ENCODE measurements at regions of chr9 and their contacts with region 1.

Region 1: DNA sequence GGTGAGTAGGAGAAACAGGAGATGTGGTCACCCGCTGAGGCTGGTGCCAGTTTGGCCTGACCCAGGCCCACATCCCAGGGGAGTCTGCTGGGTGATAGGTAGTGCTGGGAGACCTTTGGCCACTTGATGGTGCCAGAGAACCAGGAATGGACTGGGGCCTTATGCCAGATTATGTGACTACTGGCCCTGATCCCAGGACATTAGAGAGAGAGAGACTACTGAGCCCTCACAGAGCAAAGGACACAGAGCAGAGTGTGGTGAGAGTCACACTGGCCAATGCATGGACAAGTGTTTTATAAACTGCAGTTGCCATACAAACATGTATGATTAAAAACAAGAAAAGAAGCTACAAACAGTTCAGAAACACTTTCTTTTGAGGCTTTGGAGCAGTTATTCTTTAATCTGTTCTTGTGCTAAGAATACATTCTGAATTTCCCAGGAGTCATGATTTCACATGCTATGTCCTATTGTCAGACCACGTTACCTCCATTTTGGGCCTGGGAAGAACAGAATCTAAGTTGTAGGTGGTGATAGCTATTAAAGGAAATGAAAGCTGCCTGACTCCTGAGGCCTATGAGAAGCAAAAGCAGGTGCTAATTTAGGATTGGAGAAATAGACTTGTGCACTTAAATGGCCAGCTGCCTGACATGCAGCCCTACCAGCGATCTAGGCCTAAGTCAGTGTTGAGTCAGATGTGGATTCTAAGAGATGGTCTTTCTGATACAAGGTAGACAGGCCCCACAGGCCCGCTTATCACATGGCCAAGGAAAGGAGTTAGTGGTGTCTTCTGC is 32.6 kb upstream of the TMOD1 start:
- DNase-seq: peak; percentile 67
- ATAC-seq: peak; percentile 100
- H3K4me3 ChIP-seq: no peak overlapping the region
- H3K27ac ChIP-seq: no peak overlapping the region
- H3K4me1 ChIP-seq: no peaks in the 10 kb centered on the region
- H3K27me3 ChIP-seq: no peaks in the 10 kb centered on the region
- CTCF ChIP-seq: peak; percentile 95
- EP300 ChIP-seq: no peak
- POLR2A ChIP-seq: no peak
- RAD21 ChIP-seq: peak; percentile 94

Region 2: DNA sequence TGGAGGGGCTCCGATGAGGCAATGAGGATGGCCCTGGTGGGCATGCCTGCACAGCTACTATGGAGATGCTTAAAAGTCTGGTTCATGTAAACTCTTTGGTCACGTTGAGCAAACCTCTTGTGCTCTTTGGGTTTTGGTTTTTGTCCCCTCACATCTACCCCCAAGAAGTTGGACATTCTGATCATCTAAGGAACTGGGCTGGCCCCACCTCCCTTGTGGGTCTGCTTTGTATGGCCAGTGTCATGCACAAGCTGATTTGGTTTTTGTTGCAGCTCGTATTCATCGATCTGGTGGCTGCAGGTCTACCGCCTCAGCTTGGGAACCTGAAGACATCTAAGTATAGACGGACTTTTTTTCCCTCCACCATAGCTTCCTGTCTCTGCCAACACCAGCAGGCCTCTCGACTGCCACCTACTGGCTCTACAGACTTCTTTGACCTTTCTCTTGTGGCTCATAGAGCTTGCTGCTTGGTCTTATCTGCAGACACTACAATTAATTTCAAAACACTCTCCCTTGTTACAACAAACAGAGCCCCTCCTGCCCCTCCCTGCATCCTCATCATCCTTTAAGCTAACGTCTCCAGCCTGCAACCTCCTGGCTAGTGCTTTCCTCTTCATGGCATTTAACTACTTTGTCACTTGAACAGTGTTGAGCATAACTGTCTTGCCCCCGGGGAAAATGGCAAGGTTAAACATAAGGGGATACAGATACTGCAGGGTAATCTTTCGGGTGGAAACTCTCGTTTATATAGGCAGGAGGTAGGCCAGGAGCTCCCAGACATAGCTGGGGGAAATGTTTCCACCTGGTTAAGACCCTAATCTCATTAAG is 129.8 kb after region 1 on chr9:
- CTCF ChIA-PET with region 1: interaction called, 23 read pairs
- POLR2A ChIA-PET with region 1: no interaction called
- in situ Hi-C with region 1: loop called (anchors 10 kb)
- intact Hi-C with region 1: loop called (anchors 1 kb)
- DNase-seq: peak; percentile 69
- ATAC-seq: peak; percentile 91
- H3K4me3 ChIP-seq: no peak overlapping the region
- H3K27ac ChIP-seq: no peak overlapping the region
- H3K4me1 ChIP-seq: peaks cover 6% of the 10 kb centered on the region
- H3K27me3 ChIP-seq: no peaks in the 10 kb centered on the region
- CTCF ChIP-seq: peak; percentile 86
- EP300 ChIP-seq: no peak
- POLR2A ChIP-seq: no peak
- RAD21 ChIP-seq: peak; percentile 53; the same call in 1 of the 2 replicates

Region 3: DNA sequence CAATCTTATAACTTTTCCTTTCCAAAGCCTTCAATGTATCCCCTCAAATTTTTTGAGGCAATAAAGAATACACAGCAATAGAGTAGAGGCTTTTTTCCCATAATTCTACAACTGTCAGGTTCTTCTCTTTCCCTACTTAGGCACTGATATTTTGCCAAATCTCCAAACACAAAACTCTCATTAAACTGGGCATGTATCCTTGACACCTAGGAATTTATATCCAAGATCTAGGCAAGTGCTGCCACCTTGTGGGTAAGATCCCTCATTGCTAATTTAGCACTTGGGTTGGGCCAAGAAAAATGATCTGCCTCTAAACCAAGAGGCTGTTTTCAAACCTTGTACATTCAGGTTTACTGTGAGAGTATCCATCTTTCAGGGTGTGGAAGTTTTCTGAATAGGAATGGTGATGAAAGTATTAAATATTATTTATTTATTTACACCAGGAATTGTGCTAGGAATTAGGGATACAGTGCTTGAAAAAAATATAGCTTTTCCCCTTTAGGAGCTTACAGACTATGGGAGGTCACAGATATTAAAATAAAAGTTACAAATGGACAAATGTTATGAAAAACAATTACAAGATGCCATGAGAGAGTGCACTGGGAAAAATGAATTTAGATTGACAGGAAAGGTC is 146.7 kb after region 1 on chr9:
- CTCF ChIA-PET with region 1: interaction called, 15 read pairs
- POLR2A ChIA-PET with region 1: no interaction called
- in situ Hi-C with region 1: no loop called
- intact Hi-C with region 1: loop called (anchors 1 kb)
- DNase-seq: peak; percentile 39
- ATAC-seq: peak; percentile 49; the same call in 1 of the 3 replicates
- H3K4me3 ChIP-seq: no peak overlapping the region
- H3K27ac ChIP-seq: no peak overlapping the region
- H3K4me1 ChIP-seq: no peaks in the 10 kb centered on the region
- H3K27me3 ChIP-seq: no peaks in the 10 kb centered on the region
- CTCF ChIP-seq: peak; percentile 82
- EP300 ChIP-seq: no peak
- POLR2A ChIP-seq: no peak
- RAD21 ChIP-seq: peak; percentile 52; the same call in 1 of the 2 replicates